Activated naive CD4-positive, alpha-beta T cell treated with anti-CD3 and anti-CD28 coated beads for 36 hours (primary cell): ENCODE measurements at regions of chr2 and their contacts with region 1.

Region 1: DNA sequence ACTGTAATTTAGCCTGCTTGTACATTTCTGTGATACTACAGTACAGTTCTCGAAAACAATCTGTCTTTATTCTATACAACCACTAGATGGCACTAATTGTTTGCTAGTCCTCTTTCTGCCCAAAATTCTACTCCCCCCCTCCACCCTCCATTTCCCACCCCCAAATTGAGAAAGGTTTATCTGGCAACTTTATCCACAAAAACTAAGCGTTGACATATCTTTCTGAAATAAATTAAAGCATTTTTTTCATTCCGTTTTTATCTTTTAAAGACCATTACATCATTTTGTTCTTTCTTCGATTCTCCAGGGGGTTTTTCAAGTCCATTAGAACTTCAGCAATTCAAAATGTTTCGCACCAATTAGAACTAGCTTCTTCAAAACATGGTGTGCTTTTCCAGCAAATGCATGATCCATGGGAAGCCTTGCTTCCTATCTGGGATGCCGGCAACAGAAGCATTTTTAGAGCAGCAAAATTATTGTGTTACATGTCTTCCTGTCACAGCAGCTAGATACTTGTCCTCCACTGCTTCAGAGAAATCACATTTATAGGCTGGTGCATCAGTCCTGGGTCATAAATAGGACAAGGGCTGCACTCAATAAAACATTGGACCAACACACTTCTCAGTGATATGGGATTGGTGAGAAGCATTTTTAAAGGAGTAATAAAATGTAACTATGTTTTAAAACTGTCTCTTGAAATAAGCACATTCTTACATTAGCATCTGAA is 241.3 kb downstream of the PAX3 start:
- DNase-seq: no peak
- H3K4me3 Mint-ChIP-seq: no peak overlapping the region
- H3K27ac Mint-ChIP-seq: no peak overlapping the region
- H3K4me1 Mint-ChIP-seq: no peaks in the 10 kb centered on the region
- H3K27me3 Mint-ChIP-seq: peaks cover 28% of the 10 kb centered on the region

Region 2: DNA sequence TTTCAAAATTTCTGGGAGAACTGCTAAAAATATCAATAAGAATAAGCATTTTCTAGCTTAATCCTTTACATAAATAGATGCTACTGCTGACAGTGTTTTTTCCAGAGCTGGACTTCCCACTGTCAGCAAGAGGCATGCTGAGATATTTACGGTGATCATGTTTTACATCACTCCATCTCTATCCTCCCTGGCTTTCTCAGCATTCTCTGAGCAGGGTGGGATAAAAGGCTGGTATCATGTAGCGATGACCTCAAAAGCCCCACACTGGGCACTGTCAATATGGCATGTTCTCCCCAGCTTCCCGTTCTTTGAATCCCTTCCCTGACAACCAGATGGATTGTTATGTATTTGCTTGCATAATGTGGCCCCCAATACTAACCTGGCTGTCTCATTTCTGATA is 402.2 kb before region 1 on chr2:
- CTCF ChIA-PET with region 1: no interaction called
- intact Hi-C with region 1: no loop called
- DNase-seq: no peak
- H3K4me3 Mint-ChIP-seq: no peak overlapping the region
- H3K27ac Mint-ChIP-seq: no peak overlapping the region
- H3K4me1 Mint-ChIP-seq: no peaks in the 10 kb centered on the region
- H3K27me3 Mint-ChIP-seq: peaks cover 1% of the 10 kb centered on the region

Region 3: DNA sequence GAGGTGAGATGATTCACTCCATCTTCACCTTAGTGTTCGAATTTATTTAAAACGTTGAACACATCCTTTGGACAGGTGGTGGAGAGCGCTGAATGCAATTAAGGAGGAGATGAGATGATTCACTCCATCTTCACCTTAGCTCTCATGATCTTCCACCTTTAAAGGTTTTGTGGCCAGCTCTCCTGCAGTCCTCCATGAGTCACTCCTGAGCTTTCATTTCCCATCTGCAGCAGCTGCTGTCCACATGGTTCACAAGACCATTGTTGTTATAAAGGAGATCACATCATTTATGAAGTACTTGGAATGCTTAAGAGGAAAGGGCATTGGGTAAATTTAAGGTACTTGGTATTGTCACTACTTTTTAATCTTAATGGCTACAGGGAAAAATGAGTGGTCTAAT is 57.2 kb before region 1 on chr2:
- CTCF ChIA-PET with region 1: no interaction called
- intact Hi-C with region 1: no loop called
- DNase-seq: no peak
- H3K4me3 Mint-ChIP-seq: no peak overlapping the region
- H3K27ac Mint-ChIP-seq: no peak overlapping the region
- H3K4me1 Mint-ChIP-seq: no peaks in the 10 kb centered on the region
- H3K27me3 Mint-ChIP-seq: no peaks in the 10 kb centered on the region

Region 4: GRCh38 chr2:222318026-222318711 is 260.7 kb after region 1 on chr2:
- CTCF ChIA-PET with region 1: interaction called, 3 read pairs
- intact Hi-C with region 1: loop called (anchors 1 kb)
- DNase-seq: peak; percentile 58
- H3K4me3 Mint-ChIP-seq: peak overlapping the region; percentile 74
- H3K27ac Mint-ChIP-seq: no peak overlapping the region
- H3K4me1 Mint-ChIP-seq: peaks cover 6% of the 10 kb centered on the region
- H3K27me3 Mint-ChIP-seq: peaks cover 66% of the 10 kb centered on the region

Region 5: GRCh38 chr2:222483513-222484039 is 426.1 kb after region 1 on chr2:
- CTCF ChIA-PET with region 1: no interaction called
- intact Hi-C with region 1: loop called (anchors 1 kb)
- DNase-seq: peak; percentile 30
- H3K4me3 Mint-ChIP-seq: no peak overlapping the region
- H3K27ac Mint-ChIP-seq: no peak overlapping the region
- H3K4me1 Mint-ChIP-seq: peaks cover 2% of the 10 kb centered on the region
- H3K27me3 Mint-ChIP-seq: peaks cover 15% of the 10 kb centered on the region

Region 6: DNA sequence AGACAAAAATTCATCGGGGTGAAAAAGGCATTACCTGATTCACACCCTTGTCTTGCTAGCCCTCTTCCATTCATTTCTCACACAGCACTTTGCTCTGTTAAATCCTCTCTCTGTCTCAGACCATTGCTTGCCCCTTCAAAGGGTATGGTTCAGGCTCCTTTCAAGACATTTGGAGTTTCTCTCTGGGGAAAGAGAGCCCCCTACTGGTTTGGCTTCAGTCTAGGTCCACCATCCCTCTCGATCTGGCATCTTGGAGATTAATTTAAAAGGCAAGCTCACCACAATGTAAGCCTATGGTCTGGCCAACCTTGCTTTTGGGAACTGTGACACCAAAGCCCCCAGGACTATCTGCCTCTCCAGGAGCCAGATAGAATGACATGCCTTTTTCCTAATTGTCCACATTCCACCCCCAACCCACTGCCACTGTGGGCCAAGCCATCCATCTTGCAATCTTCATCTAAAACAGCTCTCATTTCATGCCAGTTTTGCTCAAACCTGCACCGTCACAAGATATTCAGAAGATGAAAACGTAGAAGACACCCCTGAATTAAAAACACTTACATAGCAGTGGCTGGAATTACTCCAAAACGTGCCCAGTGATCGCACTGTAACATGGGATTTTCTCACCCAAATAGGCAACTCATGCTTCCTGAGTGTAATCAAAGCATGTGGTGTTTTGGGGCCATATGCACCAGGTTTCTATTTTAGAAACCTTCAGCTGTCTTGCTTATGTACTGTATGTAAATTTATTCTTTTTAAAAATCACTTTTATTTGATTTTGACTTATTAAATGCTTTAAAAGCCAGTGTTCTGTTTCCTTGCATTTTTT is 504.5 kb after region 1 on chr2:
- CTCF ChIA-PET with region 1: interaction called, 3 read pairs
- intact Hi-C with region 1: loop called (anchors 1 kb)
- DNase-seq: peak; percentile 62
- H3K4me3 Mint-ChIP-seq: no peak overlapping the region
- H3K27ac Mint-ChIP-seq: no peak overlapping the region
- H3K4me1 Mint-ChIP-seq: no peaks in the 10 kb centered on the region
- H3K27me3 Mint-ChIP-seq: no peaks in the 10 kb centered on the region

Region 7: GRCh38 chr2:222613715-222614331 is 556.3 kb after region 1 on chr2:
- CTCF ChIA-PET with region 1: interaction called, 5 read pairs
- intact Hi-C with region 1: loop called (anchors 1 kb)
- DNase-seq: no peak
- H3K4me3 Mint-ChIP-seq: no peak overlapping the region
- H3K27ac Mint-ChIP-seq: no peak overlapping the region
- H3K4me1 Mint-ChIP-seq: no peaks in the 10 kb centered on the region
- H3K27me3 Mint-ChIP-seq: no peaks in the 10 kb centered on the region

Region 8: DNA sequence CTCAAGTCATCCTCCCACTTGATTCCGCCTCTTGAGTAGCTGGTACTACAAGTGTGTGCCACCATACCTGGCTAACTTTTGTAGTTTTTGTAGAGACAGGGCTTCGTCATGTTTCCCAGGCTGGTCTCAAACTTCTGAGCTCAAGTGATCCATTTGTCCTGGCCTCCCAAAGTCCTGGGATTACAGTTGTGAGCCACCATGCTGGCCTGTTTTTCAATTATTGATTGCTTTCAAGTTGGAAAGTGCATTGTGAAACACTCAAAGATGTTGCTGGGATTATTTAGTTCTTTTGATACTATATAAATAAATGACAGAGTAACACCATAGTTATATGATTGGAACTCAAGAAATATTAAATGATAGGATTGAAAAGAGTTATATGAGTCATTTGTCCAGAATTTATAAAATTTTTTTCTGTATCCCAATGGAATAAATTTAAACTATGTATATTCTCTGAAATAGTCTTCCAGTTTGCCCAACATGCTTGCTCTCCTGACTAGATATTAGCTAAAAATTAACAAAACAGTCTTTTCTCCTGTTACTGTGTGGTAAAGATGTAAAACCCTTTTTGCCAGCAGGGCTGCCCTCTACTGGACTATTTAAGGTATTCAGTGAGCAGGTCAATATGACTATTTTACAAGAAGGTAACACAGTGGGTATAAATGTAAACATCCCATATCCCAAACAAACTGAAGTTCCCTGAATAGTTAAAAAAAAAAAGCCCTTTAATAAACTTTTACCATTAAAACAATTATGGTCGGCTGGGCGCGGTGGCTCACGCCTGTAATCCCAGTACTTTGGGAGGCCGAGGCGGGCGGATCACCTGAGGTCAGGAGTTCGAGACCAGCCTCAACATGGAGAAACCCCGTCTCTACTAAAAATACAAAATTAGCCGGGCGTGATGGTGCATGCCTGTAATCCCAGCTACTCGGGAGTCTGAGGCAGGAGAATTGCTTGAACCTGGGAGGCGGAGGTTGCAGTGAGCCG is 846.0 kb after region 1 on chr2:
- CTCF ChIA-PET with region 1: no interaction called
- intact Hi-C with region 1: loop called (anchors 10 kb)
- DNase-seq: peak; percentile 55
- H3K4me3 Mint-ChIP-seq: no peak overlapping the region
- H3K27ac Mint-ChIP-seq: no peak overlapping the region
- H3K4me1 Mint-ChIP-seq: peaks cover 23% of the 10 kb centered on the region
- H3K27me3 Mint-ChIP-seq: no peaks in the 10 kb centered on the region